ENCODE measurements at regions of chr6 and their contacts with region 1.

Region 1: DNA sequence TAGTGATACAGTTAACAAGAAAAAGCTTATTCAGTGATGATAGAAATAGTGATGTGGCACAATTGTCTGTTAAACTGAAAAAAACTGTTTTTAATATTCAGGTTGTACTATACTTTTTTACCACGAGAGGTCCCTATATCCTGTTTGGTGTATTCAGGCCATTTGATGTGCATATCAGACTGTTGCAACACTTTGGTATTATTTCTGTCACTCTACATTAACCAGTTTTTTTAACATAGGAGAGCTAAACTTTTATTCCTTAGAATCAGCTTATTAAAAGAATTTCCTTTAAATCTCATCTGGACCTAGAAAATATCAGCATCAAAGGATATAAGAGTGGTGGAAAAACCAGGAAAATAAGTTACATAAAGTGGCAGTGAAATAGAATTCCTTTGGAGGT is 36.8 kb downstream of the TSPYL4 start:
- DNase-seq: no peak
- H3K4me3 ChIP-seq: no peak overlapping the region
- CTCF ChIP-seq: peak; percentile 30

Region 2: DNA sequence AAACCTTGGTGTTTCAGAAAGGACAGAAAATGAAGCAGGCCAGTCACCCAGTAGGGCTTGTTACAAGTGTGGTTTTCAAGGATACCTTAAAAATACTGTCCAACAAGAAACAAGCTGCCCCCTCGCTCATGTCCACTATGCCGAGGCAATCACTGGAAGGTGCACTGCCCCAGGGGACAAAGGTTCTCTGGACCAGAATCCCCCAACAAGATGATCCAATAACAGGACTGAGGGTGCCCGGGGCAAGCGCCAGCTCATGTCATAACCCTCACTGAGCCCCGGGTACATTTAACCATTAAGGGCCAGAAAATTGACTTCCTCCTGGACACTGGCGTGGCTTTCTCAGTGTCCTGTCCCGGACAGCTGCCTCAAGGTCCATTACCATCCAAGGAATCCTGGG is 123.0 kb before region 1 on chr6:
- CTCF ChIA-PET with region 1: no interaction called
- POLR2A ChIA-PET with region 1: no interaction called
- DNase-seq: no peak
- H3K4me3 ChIP-seq: no peak overlapping the region
- CTCF ChIP-seq: no peak

Region 3: GRCh38 chr6:116206231-116206903 is 10.7 kb before region 1 on chr6:
- CTCF ChIA-PET with region 1: interaction called, 41 read pairs
- POLR2A ChIA-PET with region 1: no interaction called
- DNase-seq: no peak
- H3K4me3 ChIP-seq: no peak overlapping the region
- CTCF ChIP-seq: no peak

Region 4: DNA sequence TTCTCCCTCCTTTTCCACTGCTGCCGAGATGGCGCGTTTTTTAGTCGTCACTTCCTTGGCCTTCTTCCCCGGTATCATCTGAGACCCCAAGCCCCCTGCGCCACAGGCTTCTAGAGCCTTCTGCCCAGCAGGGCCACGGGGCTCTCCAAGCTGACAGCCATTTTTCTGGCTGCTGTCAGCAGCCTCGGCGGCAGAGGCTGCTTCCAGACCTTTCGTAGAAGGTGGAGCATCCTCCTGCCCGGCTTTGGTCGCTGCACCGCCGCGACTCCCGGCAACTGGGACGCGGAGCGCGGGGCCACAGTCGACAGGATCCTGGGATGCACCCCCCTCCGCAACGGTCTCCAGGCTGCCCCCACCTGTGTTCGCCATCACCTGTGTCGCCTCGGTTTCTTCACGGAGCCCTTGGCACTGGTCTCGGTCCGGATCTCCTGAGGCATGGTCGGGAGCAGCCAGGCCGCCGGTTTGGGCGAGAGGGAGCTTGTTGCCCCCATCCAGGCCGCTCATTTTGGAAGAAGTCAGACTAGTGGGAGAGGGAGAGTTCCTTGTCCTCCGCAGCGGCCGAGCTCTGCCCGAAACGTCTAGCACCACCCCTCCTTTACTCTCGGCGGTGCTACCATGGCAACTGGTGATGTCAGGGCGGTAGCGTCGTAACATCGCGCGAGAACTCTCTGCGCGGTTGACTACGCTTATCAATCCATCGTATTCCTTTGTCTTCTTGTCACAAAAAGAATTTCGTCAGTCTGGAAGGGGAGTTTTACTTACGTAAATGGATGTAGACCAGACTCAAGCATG is 36.6 kb after region 1 on chr6 and contains the start of gene TSPYL4:
- CTCF ChIA-PET with region 1: interaction called, 55 read pairs
- POLR2A ChIA-PET with region 1: no interaction called
- DNase-seq: no peak
- H3K4me3 ChIP-seq: peak within 1 kb of the TSS; percentile 98
- CTCF ChIP-seq: no peak

Region 5: GRCh38 chr6:116561377-116562018 is 344.4 kb after region 1 on chr6:
- CTCF ChIA-PET with region 1: interaction called, 44 read pairs
- POLR2A ChIA-PET with region 1: no interaction called
- DNase-seq: no peak
- H3K4me3 ChIP-seq: no peak overlapping the region
- CTCF ChIP-seq: peak; percentile 70

Measured in AG04449 (cell line).